ENCODE measurements at regions of chr2 and their contacts with region 1.

Region 1: DNA sequence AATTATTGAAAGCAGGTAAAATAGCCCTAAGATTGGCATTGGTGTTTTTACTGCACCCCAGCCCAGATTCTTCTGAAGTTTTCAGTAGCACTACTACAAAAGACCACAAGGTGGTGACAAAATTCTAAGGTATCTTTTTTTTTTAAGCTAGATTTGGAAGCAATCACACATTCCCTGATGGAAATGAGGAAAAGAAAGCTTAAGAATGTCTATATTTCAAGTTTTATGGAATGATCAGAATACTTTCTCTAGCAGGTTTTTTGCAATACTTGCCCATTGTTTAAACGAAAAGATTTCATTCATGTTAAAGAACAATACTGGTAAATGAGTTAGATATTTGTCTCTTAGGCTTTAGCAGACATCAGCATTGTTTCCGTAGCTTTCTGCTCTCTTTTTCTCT is 32.1 kb upstream of the ZNF638 start:
- DNase-seq: peak; percentile 67

Region 2: DNA sequence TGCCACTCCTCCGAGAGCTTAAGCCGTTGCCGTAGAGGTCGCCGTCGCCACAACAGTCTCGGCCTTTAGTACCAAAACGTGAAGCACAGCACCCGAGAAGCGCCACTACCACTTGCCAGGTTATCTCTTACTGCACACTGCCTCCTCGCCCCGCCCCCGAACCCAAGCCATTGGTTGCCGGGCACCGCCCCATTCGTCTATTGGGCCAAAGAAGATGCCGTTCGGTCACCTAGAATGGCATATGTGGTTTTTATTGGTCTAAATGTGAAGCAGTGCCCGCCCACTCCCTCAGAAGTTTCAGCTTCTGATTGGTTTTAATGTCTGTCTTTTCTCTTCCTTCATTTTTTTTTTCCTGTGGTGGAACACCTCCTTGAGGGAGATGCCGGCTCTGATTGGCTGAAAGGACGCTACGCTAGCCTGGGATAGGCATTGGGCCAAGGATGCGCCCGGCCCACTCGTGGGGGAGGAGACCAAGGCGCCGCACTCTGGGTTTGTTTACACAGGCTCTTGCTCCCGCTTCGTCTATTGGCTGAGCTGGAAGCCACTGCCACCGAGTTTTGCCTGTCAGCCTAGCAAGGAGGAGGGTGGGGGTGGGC is 72.4 kb before region 1 on chr2 and contains the start of gene PAIP2B:
- in situ Hi-C with region 1: loop called (anchors 10 kb)
- DNase-seq: peak; percentile 100
- total RNA-seq, gene PAIP2B: 1.0 and 1.5 TPM in 2 replicates

Measured in SK-MEL-5 (cell line).